ENCODE measurements at regions of chr11 and their contacts with region 1.

Region 1: GRCh38 chr11:2151500-2152257 is 9.3 kb downstream of the INS start:
- DNase-seq: peak; percentile 65 to 96 (median 84)

Region 2: GRCh38 chr11:1652771-1653540 is 498.7 kb before region 1 on chr11:
- intact Hi-C with region 1: loop called (anchors 1 kb)
- DNase-seq: peak; percentile 70 to 98 (median 86)

Region 3: GRCh38 chr11:1837171-1838076 is 314.3 kb before region 1 on chr11:
- intact Hi-C with region 1: loop called (anchors 2 kb)
- DNase-seq: peak in 9 of 10 donors; percentile 47 to 93 (median 68)

Region 4: DNA sequence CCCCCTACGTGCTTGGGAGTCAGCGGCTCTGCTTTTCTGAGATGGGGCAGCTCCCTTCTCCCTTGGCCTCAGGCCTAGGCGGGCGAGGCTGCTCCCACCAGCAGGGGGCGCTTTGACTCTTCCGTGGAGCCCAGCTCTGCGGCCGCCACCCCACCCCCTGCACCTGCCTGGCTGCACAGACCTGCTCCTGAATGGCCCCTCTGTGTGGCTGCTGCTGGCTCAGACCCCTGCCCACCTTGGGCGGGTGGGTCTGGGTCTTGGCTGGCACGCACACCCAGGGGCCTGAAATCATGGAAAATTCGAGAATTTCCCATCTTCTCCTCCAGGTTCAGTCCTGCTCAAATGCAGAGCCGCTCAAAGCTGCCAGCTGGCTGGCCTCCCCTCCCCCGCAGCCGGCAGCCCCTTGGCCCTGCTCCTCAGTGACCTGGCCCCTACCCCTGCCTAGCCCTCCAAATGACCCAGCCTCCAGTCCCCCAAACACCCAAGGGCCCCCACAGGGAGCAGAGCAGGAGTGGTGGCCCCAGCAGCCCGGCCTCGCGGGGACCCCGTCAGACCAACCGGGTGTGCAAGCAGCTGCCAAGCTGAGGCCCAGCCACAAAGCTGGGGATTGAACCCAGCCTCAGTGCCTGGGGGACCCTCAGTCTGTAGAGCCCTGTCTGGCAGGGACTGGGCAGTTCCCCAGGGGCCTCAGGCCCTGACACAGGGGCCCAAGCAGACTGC is 269.0 kb before region 1 on chr11:
- intact Hi-C with region 1: loop called (anchors 2 kb)
- DNase-seq: peak; percentile 49 to 96 (median 72)